ENCODE measurements at regions of chr3 and their contacts with region 1.

Region 1: DNA sequence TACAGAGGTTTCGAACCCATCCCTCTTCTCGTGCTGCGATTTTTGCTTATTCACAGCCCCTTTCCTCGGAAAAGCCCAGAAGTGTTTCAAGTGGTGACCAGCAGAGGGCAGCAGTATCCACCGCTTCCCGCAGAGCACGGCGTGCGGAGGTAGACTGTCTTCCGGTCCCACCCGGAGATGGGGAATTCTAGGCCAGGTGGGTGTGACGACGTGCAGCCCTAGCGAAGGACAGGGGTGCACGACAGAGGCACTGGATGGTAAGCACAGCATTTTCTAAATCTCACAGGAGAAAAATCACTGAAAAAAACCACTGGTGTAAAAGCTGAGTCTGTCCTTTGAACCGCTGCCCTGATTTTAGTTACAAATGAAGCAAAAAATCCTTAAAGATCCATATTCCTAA is 7.4 kb upstream of the PSMD6 start:
- DNase-seq: no peak
- H3K4me3 ChIP-seq: peak overlapping the region; percentile 42
- H3K27ac ChIP-seq: no peak overlapping the region
- H3K27me3 ChIP-seq: no peaks in the 10 kb centered on the region
- CTCF ChIP-seq: peak; percentile 88

Region 2: GRCh38 chr3:64058566-64058965 is 27.8 kb after region 1 on chr3:
- CTCF ChIA-PET with region 1: interaction called, 10 read pairs
- POLR2A ChIA-PET with region 1: no interaction called
- DNase-seq: no peak
- H3K4me3 ChIP-seq: no peak overlapping the region
- H3K27ac ChIP-seq: no peak overlapping the region
- H3K27me3 ChIP-seq: no peaks in the 10 kb centered on the region
- CTCF ChIP-seq: no peak

Region 3: DNA sequence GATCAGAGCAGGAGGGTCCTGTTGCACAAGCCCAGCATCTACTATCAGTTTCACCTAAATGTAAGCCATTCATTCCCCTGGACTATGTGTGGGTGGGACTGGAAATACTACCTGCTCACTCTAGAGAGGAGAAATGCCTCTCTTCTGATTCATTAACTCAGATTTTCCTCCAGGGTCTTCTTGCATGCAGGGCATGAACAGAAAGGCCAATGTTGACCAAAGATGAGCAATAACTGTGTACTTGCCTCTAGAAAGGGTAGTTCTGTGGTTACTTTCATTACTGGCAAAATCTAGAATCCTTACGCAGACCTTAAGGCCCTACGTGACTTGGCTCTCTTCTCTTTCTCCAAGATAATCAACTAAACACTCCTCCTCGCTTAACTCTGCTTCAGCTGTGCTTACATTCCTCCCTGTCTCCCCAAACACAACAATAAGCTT is 74.0 kb after region 1 on chr3:
- CTCF ChIA-PET with region 1: interaction called, 12 read pairs
- POLR2A ChIA-PET with region 1: no interaction called
- DNase-seq: no peak
- H3K4me3 ChIP-seq: no peak overlapping the region
- H3K27ac ChIP-seq: no peak overlapping the region
- H3K27me3 ChIP-seq: no peaks in the 10 kb centered on the region
- CTCF ChIP-seq: no peak

Region 4: DNA sequence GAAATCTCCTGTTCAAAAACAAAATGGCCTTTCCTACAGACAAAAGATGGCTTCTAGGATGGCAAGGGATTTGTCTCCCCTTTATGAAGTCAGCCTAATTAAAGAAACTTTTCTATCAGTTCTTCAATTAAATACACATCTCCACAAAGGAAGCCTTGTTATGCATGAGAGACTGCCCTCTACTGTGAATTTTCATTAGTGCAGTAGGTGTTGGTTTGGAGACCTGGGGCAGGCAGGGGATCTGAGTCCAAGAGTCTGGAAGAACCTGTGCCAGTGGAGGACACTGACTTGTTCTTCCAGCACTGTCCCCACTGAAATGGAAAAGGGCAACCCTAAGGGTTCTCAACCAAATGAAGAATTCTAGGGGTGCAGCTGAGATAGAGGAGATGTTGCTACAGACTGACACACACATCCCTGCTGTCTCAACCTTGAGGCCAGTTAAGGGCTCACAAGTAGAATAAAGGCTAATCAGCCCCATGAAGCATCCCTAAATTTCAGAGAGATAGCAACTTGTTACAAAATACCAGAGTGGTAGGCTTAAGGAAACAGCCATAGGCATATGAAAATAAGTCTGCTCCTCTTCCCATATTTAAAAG is 368.6 kb after region 1 on chr3:
- CTCF ChIA-PET with region 1: interaction called, 17 read pairs
- POLR2A ChIA-PET with region 1: no interaction called
- DNase-seq: peak; percentile 18
- H3K4me3 ChIP-seq: no peak overlapping the region
- H3K27ac ChIP-seq: no peak overlapping the region
- H3K27me3 ChIP-seq: no peaks in the 10 kb centered on the region
- CTCF ChIP-seq: peak; percentile 83

Measured in AG04450 (cell line).